ENCODE measurements at regions of chr6 and their contacts with region 1.

Region 1: GRCh38 chr6:155400654-155400965 is 55.0 kb downstream of the NOX3 start:
- DNase-seq: no peak
- H3K4me3 ChIP-seq: no peak overlapping the region
- H3K27ac ChIP-seq: no peak overlapping the region
- H3K4me1 ChIP-seq: no peaks in the 10 kb centered on the region
- H3K27me3 ChIP-seq: no peaks in the 10 kb centered on the region; a peak in 1 of 7 replicates
- CTCF ChIP-seq: no peak
- EP300 ChIP-seq: no peak
- POLR2A ChIP-seq: no peak
- RAD21 ChIP-seq: no peak

Region 2: DNA sequence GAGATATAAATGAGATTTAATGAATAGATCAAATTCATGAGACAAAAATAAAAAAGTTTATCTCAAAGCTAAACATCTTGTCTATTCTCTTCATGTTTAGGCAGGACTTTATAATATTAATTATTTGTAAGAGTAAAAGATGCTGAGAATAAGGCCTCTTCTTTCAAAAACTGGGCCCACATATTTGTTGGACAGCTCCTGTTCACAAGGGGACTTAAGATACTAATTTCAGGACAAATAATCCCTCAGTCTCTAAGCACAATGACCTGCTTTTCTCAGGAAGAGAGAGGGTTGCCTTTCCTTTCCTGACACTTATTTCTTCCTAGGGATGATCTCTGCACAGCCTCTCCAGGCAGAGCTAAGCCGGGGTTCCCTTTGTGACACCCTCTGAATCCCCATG is 11.7 kb after region 1 on chr6:
- CTCF ChIA-PET with region 1: interaction called, 20 read pairs
- POLR2A ChIA-PET with region 1: no interaction called
- DNase-seq: no peak
- H3K4me3 ChIP-seq: no peak overlapping the region
- H3K27ac ChIP-seq: no peak overlapping the region
- H3K4me1 ChIP-seq: peaks cover 0 to 2% (median under 1%) of the 10 kb centered on the region in 4 experiments; a peak in 2 of 7 replicates
- H3K27me3 ChIP-seq: no peaks in the 10 kb centered on the region
- CTCF ChIP-seq: no peak
- EP300 ChIP-seq: no peak
- POLR2A ChIP-seq: no peak
- RAD21 ChIP-seq: no peak

Region 3: GRCh38 chr6:155444120-155444917 is 43.7 kb after region 1 on chr6:
- CTCF ChIA-PET with region 1: no interaction called
- POLR2A ChIA-PET with region 1: no interaction called
- DNase-seq: no peak
- H3K4me3 ChIP-seq: no peak overlapping the region
- H3K27ac ChIP-seq: no peak overlapping the region
- H3K4me1 ChIP-seq: peaks cover 0 to 7% (median 2%) of the 10 kb centered on the region in 4 experiments; a peak in 3 of 7 replicates
- H3K27me3 ChIP-seq: no peaks in the 10 kb centered on the region
- CTCF ChIP-seq: no peak
- EP300 ChIP-seq: no peak
- POLR2A ChIP-seq: no peak
- RAD21 ChIP-seq: no peak

Region 4: DNA sequence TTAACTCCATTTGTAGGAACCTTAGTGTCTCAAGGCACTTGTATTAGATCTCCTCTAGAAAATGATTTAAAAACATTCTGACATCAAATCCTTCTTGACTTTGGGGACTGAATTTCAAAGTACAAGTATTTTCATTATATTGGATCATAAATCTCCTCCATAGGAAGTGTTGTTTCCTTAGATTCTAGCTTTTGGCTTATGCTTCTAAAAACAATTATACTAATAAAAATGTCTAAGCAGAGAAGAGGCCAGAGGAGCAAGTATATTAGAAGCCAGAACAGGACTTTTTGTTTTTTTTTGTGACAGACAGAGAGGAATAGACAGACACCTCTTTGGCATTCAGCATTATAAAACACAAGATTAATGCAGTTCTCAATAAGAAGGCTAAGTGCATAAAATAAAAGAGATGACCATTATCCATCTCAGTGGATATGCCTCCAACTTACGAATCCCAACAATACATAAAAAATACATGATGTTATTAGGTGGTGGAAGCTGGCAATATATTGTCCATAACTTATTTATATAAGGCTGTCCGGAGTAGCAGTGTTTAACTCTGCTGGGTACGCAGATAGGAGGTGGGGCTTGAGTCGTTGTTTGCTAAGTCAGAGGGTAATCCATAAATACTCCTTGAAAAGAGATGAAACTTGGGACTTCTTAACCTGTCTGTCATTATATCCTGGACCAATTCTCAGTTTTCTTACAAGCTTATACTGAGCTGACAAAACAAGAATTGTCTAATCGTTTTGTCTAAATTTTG is 86.9 kb after region 1 on chr6:
- CTCF ChIA-PET with region 1: no interaction called
- POLR2A ChIA-PET with region 1: no interaction called
- DNase-seq: no peak
- H3K4me3 ChIP-seq: no peak overlapping the region
- H3K27ac ChIP-seq: no peak overlapping the region
- H3K4me1 ChIP-seq: no peaks in the 10 kb centered on the region
- H3K27me3 ChIP-seq: no peaks in the 10 kb centered on the region
- CTCF ChIP-seq: no peak
- EP300 ChIP-seq: no peak
- POLR2A ChIP-seq: no peak
- RAD21 ChIP-seq: no peak

Measured in H1 (cell line).